ENCODE measurements at regions of chr1 and their contacts with region 1.

Region 1: GRCh38 chr1:178542560-178543356 is 29.8 kb downstream of the TEX35 start:
- DNase-seq: peak; percentile 90 to 94
- ATAC-seq: peak; percentile 88 to 97 (median 92)
- H3K4me3 ChIP-seq: peak overlapping the region; percentile 50 to 87 (median 66)
- H3K27ac ChIP-seq: peak overlapping the region; percentile 4 to 88 (median 80)
- H3K4me1 ChIP-seq: peaks cover 0 to 33% (median 18%) of the 10 kb centered on the region in 9 donors
- H3K27me3 ChIP-seq: no peaks in the 10 kb centered on the region
- CTCF ChIP-seq: peak; percentile 91 to 100 (median 99)

Region 2: DNA sequence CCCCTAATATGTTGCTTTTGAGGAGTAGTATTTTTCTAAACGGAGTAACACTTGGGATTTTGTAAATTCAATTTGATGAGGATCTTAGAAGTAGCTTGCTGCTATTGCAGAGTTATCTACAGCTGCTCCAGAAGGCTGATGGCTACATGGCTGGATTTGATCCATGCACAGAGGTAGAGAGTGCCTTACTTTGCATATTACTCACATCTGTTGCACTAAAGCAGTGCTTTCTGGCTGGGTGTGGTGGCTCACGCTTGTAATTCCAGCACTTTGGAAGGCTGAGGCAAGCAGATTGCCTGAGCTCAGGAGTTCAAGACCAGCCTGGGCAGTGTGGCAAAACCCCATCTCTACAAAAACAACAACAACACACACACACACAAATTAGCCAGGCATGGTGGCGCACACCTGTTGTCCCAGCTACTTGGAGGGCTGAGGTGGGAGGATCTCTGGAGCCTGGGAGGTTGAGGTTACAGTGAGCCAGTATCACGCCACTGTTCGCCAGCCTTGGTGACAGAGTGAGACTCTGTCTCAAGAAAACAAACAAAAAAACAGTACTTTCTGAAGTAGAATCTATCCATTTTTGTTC is 206.9 kb after region 1 on chr1:
- intact Hi-C with region 1: loop called (anchors 1 to 5 kb)
- DNase-seq: no peak
- ATAC-seq: no peak
- H3K4me3 ChIP-seq: no peak overlapping the region
- H3K27ac ChIP-seq: no peak overlapping the region
- H3K4me1 ChIP-seq: no peaks in the 10 kb centered on the region
- H3K27me3 ChIP-seq: no peaks in the 10 kb centered on the region
- CTCF ChIP-seq: no peak